GM18951 (cell line): ENCODE measurements at regions of chr20 and their contacts with region 1.

Region 1: DNA sequence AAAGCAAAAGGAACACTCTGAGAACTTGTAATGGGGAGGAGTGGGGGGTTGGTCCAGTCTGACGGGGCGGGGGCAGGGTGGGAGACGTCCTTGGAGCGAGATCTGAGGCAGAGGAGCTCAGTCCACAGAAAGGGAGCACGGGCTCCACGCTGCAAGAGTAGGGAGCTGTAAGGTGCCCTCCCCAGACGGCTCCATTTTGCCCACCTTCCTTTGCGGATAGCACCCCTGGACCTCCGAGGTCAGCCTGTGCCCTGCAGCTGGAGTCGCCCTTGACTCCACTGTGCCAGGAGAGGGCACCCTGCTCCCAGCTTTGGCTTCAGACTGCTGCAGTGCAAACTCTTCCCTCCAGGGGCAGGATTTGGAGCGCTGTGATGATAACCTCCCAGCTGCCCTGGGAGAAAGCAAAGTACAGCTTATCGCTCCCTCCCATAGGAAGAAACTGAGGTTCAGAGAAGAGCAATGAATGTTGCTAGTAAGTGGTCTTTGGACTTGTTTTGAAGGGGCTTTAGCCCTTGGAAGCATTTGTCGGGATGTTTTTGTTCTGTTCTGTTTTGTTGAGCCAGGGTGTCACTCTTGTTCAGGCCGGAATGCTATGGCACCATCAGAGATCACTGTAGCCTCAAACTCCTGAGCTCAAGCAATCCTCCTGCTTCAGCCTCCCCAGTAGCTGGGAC is 9.5 kb upstream of the AHCY start:
- POLR2A ChIP-seq: no peak

Region 2: GRCh38 chr20:33757046-33757445 is 555.6 kb before region 1 on chr20:
- in situ Hi-C with region 1: no loop called
- POLR2A ChIP-seq: no peak

Region 3: DNA sequence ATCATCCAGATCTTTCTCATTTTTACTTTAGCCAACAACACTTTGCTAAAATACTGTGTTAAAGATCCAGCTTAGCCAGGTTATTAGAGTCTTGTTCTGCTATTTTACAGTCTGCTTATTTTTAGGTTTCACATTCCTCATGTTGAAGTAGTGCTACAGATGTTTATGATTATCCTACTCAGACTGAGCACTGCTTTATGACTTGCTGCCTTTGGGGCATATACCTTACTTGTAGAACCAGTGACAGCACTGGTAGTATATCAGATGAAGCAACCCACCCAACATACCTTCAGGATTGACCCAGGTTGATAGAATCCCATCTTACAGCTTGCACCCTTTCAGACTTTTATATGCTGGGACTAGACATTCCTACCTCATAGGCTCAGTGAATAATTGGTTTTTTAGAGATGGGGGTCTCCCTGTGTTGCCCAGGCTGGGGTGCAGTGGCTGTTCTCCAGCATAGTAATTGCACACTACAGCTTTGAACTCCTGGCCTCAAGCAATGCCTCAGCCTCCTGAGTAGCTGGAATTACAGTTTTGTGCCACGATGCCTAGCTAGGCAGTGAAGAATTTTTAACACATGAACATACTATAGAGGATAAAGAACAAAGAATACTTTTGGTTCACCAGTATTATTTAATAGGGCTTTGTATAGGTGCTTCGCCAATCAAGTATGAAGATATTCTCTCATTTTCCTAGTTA is 139.8 kb after region 1 on chr20:
- in situ Hi-C with region 1: loop called (anchors 10 kb)
- POLR2A ChIP-seq: no peak

Region 4: DNA sequence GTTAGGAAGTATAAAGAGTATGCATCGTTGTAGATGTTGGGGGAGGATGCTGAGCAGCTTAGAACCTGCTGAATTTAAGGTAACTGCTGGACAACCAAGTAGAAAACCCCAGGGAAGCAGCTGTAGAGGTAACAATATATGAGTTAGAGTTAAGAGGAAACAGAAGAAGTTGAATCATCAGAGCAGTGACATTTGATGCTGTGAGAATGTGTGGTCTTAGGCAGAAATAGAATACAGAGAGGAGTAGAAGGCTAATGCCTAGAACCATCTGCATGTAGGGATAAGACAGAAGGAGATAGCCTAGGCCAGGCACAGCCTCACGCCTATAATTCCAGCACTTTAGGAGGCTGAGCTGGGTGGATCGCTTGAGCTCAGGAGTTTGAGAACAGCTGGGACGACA is 181.0 kb after region 1 on chr20:
- in situ Hi-C with region 1: no loop called
- POLR2A ChIP-seq: no peak

Region 5: GRCh38 chr20:34516247-34517113 is 203.8 kb after region 1 on chr20 and contains the start of gene DYNLRB1:
- in situ Hi-C with region 1: loop called (anchors 10 kb)
- POLR2A ChIP-seq: peak; percentile 78